ENCODE measurements at regions of chr20 and their contacts with region 1.

Region 1: DNA sequence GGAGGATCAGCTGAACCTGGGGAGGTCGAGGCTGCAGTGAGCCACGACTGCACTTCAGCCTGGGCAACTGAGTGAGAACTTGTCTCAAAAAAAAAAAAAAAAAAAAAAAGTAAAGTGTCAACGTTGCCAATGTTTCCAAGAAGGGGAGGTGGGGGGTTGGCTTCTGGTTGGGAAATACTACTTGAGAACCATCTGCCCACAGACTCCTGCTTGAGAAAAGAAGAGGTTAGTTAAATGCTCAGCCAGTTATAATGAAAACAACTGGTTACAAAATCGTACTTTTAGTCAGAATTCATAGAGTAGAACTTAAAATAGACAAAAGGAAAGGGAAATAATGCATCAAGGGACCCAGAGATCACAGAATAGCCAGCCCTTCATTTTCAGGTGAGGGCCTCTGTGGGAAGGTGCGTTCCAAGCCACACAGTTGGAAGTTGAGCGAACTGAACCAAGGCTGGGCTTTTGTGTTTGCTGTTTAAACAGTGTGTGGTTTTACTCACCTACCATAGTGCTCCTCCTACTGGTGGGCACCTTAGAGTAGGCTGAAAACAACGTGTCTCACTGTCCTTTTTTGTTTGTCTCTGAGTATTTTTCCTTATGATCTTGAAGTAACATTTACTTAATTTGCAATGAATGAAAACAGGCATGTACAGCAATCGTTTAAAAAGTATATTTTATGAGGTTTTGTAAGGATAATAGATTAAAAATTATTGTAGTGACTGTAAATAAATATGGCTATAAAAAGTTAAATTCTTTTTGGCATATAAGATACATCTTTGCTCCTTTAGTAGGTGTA is 200.7 kb downstream of the BCAS1 start:
- DNase-seq: peak; percentile 44 to 92 (median 61)
- ATAC-seq: peak; percentile 70
- H3K4me3 ChIP-seq: no peak overlapping the region
- H3K4me3 Mint-ChIP-seq: peak overlapping the region; percentile 17
- H3K27ac ChIP-seq: peak overlapping the region; percentile 36 to 46
- H3K27ac Mint-ChIP-seq: peak overlapping the region; percentile 98
- H3K4me1 ChIP-seq: peaks cover 66% of the 10 kb centered on the region
- H3K4me1 Mint-ChIP-seq: peaks cover 73% of the 10 kb centered on the region
- H3K27me3 ChIP-seq: no peaks in the 10 kb centered on the region
- H3K27me3 Mint-ChIP-seq: no peaks in the 10 kb centered on the region
- CTCF ChIP-seq: peak; percentile 92

Region 2: GRCh38 chr20:53594068-53595017 is 275.3 kb before region 1 on chr20:
- CTCF ChIA-PET with region 1: no interaction called
- POLR2A ChIA-PET with region 1: interaction called, 33 read pairs
- intact Hi-C with region 1: loop called in 1 of 2 experiments (anchors 5 kb)
- DNase-seq: peak; percentile 95 to 100 (median 98)
- ATAC-seq: peak; percentile 63
- H3K4me3 ChIP-seq: peak overlapping the region; percentile 75
- H3K4me3 Mint-ChIP-seq: peak overlapping the region; percentile 93
- H3K27ac ChIP-seq: peak overlapping the region; percentile 63 to 74
- H3K27ac Mint-ChIP-seq: peak overlapping the region; percentile 100
- H3K4me1 ChIP-seq: peaks cover 24% of the 10 kb centered on the region
- H3K4me1 Mint-ChIP-seq: peaks cover 73% of the 10 kb centered on the region
- H3K27me3 ChIP-seq: no peaks in the 10 kb centered on the region
- H3K27me3 Mint-ChIP-seq: no peaks in the 10 kb centered on the region
- CTCF ChIP-seq: no peak

Region 3: GRCh38 chr20:53643031-53643832 is 226.4 kb before region 1 on chr20:
- CTCF ChIA-PET with region 1: no interaction called
- POLR2A ChIA-PET with region 1: interaction called, 11 read pairs
- intact Hi-C with region 1: loop called in 1 of 2 experiments (anchors 5 kb)
- DNase-seq: peak; percentile 54 to 88 (median 68)
- ATAC-seq: peak; percentile 96
- H3K4me3 ChIP-seq: peak overlapping the region; percentile 18
- H3K4me3 Mint-ChIP-seq: peak overlapping the region; percentile 84
- H3K27ac ChIP-seq: peak overlapping the region; percentile 83 to 85
- H3K27ac Mint-ChIP-seq: peak overlapping the region; percentile 93
- H3K4me1 ChIP-seq: peaks cover 38% of the 10 kb centered on the region
- H3K4me1 Mint-ChIP-seq: peaks cover 53% of the 10 kb centered on the region
- H3K27me3 ChIP-seq: no peaks in the 10 kb centered on the region
- H3K27me3 Mint-ChIP-seq: no peaks in the 10 kb centered on the region
- CTCF ChIP-seq: no peak

Region 4: GRCh38 chr20:53708129-53708968 is 161.3 kb before region 1 on chr20:
- CTCF ChIA-PET with region 1: no interaction called
- POLR2A ChIA-PET with region 1: interaction called, 12 read pairs
- intact Hi-C with region 1: loop called in 1 of 2 experiments (anchors 5 kb)
- DNase-seq: peak in 6 of 14 experiments; percentile 2 to 51 (median 26)
- ATAC-seq: peak; percentile 38
- H3K4me3 ChIP-seq: no peak overlapping the region
- H3K4me3 Mint-ChIP-seq: peak overlapping the region; percentile 69
- H3K27ac ChIP-seq: peak overlapping the region; percentile 52 to 57
- H3K27ac Mint-ChIP-seq: peak overlapping the region; percentile 92
- H3K4me1 ChIP-seq: peaks cover 45% of the 10 kb centered on the region
- H3K4me1 Mint-ChIP-seq: peaks cover 47% of the 10 kb centered on the region
- H3K27me3 ChIP-seq: no peaks in the 10 kb centered on the region
- H3K27me3 Mint-ChIP-seq: no peaks in the 10 kb centered on the region
- CTCF ChIP-seq: no peak

Region 5: DNA sequence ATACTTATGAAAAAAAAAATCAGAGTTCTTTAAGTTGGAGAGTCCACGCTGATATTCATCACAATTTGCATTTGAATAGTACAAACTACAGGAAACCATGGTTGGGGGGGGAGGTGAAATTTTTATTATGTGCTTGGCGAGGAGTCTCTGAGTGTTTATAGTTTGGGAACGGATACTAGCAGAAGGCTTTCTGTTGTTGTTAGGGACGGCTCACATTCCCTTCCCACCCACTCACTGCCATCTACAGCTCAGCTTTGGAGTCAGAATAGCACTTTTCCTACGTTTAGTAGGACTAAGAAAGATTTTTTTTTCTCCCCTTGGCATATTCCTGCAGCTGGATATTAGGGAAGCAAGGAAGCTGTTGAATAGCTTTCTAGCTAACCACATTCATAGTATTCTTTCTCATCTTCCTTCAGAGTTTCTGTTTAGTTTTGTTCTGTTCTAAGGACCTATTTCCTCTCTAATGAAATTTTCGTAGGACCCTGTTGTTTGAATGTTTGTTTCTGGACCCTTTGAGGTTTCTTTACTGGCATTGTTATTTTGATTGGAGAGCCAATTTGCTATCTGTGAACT is 40.9 kb before region 1 on chr20:
- CTCF ChIA-PET with region 1: interaction called, 3 read pairs
- POLR2A ChIA-PET with region 1: interaction called, 5 read pairs
- intact Hi-C with region 1: loop called (anchors 5 kb)
- DNase-seq: peak in 1 of 14 experiments; percentile 50
- ATAC-seq: no peak
- H3K4me3 ChIP-seq: peak overlapping the region; percentile 36
- H3K4me3 Mint-ChIP-seq: peak overlapping the region; percentile 72
- H3K27ac ChIP-seq: peak overlapping the region in 1 of 2 donors; percentile 19
- H3K27ac Mint-ChIP-seq: peak overlapping the region; percentile 70
- H3K4me1 ChIP-seq: peaks cover 7% of the 10 kb centered on the region
- H3K4me1 Mint-ChIP-seq: peaks cover 58% of the 10 kb centered on the region
- H3K27me3 ChIP-seq: no peaks in the 10 kb centered on the region
- H3K27me3 Mint-ChIP-seq: no peaks in the 10 kb centered on the region
- CTCF ChIP-seq: no peak

Region 6: DNA sequence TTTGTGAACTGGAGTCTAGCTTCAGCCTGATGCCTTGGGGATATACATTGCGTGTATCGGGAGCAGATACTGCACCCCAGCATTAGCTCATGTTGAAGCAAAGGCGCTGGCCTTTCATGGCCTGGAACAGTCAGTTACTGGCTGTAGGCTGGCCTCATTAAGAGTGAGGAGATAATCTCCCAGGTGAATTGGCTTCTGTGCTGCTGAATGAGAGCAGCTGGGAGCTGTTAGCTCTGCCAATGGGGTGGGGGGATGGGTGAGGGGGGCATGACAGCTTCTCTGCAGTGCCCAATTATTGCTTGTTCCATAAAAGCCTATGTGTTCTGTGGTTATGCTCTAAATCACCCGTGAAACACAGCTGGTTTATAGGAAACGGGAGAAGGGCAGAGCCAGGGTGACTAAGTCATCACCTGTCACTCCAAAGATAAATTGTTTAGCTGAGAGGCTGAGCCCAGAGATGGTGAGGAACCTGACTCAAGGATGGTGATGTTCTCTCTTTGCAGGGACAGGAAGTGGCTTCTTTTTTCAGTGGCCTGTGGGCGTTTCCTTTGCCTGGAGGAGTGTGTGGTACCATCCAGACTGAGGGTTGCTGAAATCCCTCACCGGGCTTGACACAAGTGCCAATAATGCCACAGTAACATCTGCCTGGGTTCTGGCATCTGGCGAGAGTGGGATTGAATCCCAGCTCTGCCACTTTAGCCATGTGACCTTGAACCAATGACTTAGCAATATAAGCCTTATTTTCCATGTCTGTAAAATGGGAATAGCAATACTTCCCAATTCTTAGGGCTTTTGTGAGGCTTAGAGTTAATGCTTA is 29.9 kb after region 1 on chr20:
- CTCF ChIA-PET with region 1: interaction called, 4 read pairs
- POLR2A ChIA-PET with region 1: interaction called, 39 read pairs
- intact Hi-C with region 1: no loop called
- DNase-seq: peak; percentile 32 to 90 (median 63)
- ATAC-seq: peak; percentile 99
- H3K4me3 ChIP-seq: no peak overlapping the region
- H3K4me3 Mint-ChIP-seq: no peak overlapping the region
- H3K27ac ChIP-seq: peak overlapping the region in 1 of 2 donors; percentile 37
- H3K27ac Mint-ChIP-seq: peak overlapping the region; percentile 76
- H3K4me1 ChIP-seq: peaks cover 15% of the 10 kb centered on the region
- H3K4me1 Mint-ChIP-seq: peaks cover 40% of the 10 kb centered on the region
- H3K27me3 ChIP-seq: no peaks in the 10 kb centered on the region
- H3K27me3 Mint-ChIP-seq: no peaks in the 10 kb centered on the region
- CTCF ChIP-seq: no peak

Measured in CD4-positive, alpha-beta T cell (primary cell).